Dendritic cell treated with granulocyte-macrophage colony-stimulating factor and Interleukin-4, amounts not matched to agents 40 ng/mL and 50 ng/mL, for 4 days (primary cell): ENCODE measurements at regions of chr2 and their contacts with region 1.

Region 1: GRCh38 chr2:127857265-127857808 is 618 bp downstream of the POLR2D start:
- H3K4me3 Mint-ChIP-seq: peak overlapping the region; percentile 93
- H3K27ac Mint-ChIP-seq: peak overlapping the region; percentile 86
- H3K4me1 Mint-ChIP-seq: peaks cover 42% of the 10 kb centered on the region
- H3K27me3 Mint-ChIP-seq: peaks cover 4% of the 10 kb centered on the region

Region 2: DNA sequence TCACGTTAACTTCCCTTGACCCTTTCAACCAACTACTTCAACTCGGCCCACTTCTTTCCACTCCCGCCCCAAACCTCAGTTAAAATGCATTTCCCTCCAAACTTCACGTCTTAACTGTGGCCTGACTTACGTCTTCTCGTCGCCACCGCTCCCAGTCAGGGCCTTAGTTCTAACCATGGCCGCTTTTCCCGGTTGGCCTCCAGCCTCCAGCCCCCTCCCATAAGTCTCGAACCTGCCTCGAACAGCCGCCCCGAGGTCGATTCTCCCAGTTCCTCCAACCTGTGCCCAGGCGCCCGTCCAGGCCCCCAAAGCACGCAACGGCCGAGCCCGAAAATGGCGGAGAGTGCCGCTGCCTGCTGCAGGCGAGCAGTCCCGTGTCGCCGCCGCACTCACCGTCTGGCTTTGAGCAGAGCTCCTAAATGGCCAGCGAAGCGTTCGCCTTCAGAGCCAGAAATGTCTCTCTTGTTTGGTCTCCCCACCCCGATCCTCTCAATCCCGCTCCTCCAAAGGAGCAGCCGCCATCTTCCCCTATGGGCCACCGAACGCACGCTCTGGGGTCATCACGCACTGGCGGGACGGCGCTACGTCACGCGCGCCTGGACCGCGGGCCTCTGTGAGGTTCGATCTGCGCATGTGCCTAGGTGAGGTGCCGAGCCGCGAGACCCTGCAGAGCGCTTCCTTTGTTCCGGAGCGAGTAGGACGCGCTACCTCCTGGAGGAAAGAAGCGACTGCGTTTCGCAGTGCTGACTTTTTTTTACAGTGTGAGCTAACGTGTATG is 46.5 kb before region 1 on chr2 and contains the start of gene WDR33:
- intact Hi-C with region 1: loop called (anchors 2 kb)
- H3K4me3 Mint-ChIP-seq: peak within 1 kb of the TSS; percentile 91
- H3K27ac Mint-ChIP-seq: peak within 1 kb of the TSS; percentile 97
- H3K4me1 Mint-ChIP-seq: peaks cover 34% of the 10 kb centered on the region
- H3K27me3 Mint-ChIP-seq: no peaks in the 10 kb centered on the region

Region 3: GRCh38 chr2:127884436-127885345 is 27.4 kb after region 1 on chr2:
- intact Hi-C with region 1: loop called (anchors 2 kb)
- H3K4me3 Mint-ChIP-seq: peak overlapping the region; percentile 99
- H3K27ac Mint-ChIP-seq: peak overlapping the region; percentile 90
- H3K4me1 Mint-ChIP-seq: peaks cover 32% of the 10 kb centered on the region
- H3K27me3 Mint-ChIP-seq: no peaks in the 10 kb centered on the region

Region 4: DNA sequence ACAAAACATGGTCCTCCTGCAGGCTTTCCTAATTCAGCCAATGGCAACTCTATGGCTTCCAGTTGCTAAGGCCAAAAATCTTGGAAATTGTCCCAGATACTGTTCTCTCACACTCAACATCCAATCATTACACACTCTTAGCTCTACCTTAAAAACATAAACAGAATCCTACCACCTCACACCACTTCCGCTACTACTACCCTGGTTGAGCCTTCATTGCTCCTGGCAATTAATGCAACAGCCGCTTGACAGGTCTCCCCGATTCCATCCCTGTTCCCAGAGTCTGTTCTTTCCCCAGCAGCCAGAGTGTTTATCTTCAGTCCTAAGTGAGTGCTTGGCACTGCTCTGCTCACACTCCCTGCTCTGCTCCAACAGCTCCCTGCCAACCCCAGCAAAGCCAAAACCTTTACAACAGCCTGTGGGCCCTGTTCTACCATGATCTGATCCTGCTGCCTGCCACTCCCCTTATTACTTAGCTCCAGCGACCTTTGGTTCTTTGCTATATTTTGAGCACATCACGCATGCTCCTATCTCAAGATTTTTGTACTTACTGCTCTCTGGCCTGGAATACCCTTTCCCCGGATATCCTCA is 95.9 kb after region 1 on chr2:
- intact Hi-C with region 1: loop called (anchors 5 kb)
- H3K4me3 Mint-ChIP-seq: no peak overlapping the region
- H3K27ac Mint-ChIP-seq: no peak overlapping the region
- H3K4me1 Mint-ChIP-seq: peaks cover 16% of the 10 kb centered on the region
- H3K27me3 Mint-ChIP-seq: no peaks in the 10 kb centered on the region

Region 5: DNA sequence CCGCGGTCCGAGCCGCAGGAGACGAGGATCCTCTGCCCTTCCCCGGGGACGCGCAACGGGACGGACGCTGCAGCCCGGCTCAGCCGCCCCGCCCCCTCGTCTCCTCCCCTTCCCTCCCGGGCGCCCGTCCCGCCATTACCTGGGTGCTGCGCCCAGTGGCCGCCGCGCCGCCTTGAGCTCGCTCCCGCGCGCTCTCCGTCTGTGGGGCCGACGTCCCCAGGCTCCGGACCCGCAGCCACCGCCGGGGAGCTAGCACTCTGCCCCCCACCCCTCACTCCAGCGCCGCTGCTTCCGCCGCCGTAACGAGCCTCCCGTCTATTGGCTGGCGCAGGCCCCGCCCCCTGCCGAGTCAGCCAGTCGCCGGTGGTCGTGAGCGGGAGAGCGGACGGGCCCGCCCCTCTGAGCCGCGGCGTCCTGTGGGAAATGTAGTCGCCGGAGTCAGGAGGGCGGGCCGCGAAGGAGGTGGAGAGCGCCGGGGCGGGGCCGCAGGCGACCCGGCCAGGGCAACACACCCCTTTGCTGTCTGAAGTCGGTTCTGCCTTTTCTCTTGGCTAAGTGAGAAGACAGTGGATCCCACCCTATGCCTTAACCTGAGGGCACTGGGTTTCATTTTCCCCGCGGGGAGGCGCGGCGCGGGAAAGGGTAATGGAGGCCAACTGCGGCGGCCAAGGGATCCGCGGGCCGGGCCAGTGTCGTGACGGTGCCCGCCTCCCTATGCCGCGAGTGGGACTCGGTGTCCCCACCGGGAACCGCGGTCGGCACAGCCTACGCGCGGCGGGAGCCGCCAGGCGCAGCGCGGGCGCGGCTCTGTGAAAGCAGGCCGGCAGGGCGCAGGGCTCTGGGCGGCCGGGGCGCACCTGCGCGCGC is 170.7 kb after region 1 on chr2 and contains the start of gene SAP130:
- intact Hi-C with region 1: loop called (anchors 5 kb)
- H3K4me3 Mint-ChIP-seq: peak within 1 kb of the TSS; percentile 95
- H3K27ac Mint-ChIP-seq: peak within 1 kb of the TSS; percentile 97
- H3K4me1 Mint-ChIP-seq: peaks cover 18% of the 10 kb centered on the region
- H3K27me3 Mint-ChIP-seq: peaks cover 1% of the 10 kb centered on the region